Right ventricle myocardium inferior (tissue), 1 donor: ENCODE measurements at regions of chr11 and their contacts with region 1.

Region 1: DNA sequence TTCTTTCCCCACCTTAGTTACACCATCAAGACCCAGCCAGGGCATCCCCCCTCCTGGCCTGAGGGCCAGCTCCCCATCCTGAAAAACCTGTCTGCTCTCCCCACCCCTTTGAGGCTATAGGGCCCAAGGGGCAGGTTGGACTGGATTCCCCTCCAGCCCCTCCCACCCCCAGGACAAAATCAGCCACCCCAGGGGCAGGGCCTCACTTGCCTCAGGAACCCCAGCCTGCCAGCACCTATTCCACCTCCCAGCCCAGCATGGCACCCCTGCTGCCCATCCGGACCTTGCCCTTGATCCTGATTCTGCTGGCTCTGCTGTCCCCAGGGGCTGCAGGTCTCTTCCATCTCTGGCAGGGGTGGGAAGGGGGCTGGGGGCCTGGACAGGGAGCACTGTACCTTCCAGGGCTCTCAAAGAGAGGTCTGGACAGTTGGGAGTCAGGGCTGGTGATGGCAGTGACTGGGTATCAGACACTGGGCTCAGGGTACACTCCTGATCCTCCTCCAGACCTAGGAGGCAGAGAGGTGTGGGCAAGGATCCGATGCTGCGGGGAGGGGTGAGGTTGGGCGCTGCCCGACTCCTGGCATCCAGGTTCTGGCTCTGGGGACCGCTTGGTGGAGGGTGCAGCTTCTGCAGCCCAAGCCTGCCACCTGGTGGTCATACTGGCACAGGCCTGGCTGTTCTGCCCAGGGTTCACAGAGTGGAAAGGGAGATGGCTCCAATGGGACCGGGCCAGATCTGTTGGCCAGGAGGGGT is at the start of gene UPK2:
- DNase-seq: peak; percentile 92
- ATAC-seq: peak; percentile 95
- total RNA-seq, gene UPK2: not detected

Region 2: DNA sequence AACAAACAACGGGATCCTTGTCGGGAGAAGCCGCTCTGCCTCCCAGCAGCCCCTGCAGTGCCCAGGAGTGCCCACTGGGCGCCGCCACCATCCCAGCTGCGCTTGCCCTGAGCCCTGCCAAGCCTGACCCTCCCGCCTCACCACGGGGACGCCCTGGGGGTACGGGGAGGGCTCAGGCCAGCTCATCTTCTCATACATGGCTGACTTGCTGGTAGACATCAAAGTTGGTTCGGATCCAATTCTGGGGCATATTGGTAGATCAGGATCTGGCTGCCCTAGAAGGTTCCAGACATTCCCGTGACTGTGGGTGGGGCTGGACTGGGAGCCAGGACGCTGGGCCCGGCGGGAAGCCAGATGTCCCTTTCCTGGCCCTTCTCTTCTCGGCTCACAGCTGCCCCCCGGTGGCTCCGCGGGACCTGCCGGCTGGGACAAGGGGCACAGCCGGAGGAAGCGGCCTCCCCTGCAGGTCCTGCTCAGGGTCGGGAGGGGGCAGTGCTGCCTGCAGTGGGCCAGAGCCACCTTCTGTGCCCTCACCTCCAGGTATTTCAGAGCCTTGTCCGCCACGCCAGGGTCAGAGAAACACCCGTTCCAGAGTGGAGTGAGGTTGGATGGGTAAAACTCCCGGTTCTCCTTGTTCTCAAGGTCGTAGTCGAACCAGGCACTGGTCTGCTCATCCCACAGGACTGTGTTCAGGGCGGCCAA is 266.3 kb before region 1 on chr11:
- intact Hi-C with region 1: loop called (anchors 1 kb)
- DNase-seq: peak; percentile 97
- ATAC-seq: peak; percentile 97

Region 3: GRCh38 chr11:118917481-118918127 is 38.7 kb before region 1 on chr11:
- intact Hi-C with region 1: no loop called
- DNase-seq: peak; percentile 79
- ATAC-seq: peak; percentile 43

Region 4: GRCh38 chr11:119106564-119107537 is 150.6 kb after region 1 on chr11 and contains the start of gene C2CD2L:
- intact Hi-C with region 1: no loop called
- DNase-seq: peak; percentile 96
- ATAC-seq: peak; percentile 95
- total RNA-seq, gene C2CD2L: 11.8 TPM